H1 (cell line): ENCODE measurements at regions of chr2 and their contacts with region 1.

Region 1: GRCh38 chr2:219079417-219079816 is 18.7 kb upstream of the IHH start:
- DNase-seq: no peak
- H3K4me3 ChIP-seq: no peak overlapping the region
- H3K27ac ChIP-seq: no peak overlapping the region
- H3K4me1 ChIP-seq: no peaks in the 10 kb centered on the region
- H3K27me3 ChIP-seq: no peaks in the 10 kb centered on the region
- CTCF ChIP-seq: no peak
- EP300 ChIP-seq: no peak
- POLR2A ChIP-seq: no peak
- RAD21 ChIP-seq: no peak

Region 2: GRCh38 chr2:219065484-219065883 is 13.9 kb before region 1 on chr2:
- CTCF ChIA-PET with region 1: interaction called, 1,006 read pairs
- POLR2A ChIA-PET with region 1: interaction called, 3 read pairs
- DNase-seq: no peak
- H3K4me3 ChIP-seq: no peak overlapping the region
- H3K27ac ChIP-seq: no peak overlapping the region
- H3K4me1 ChIP-seq: peaks cover 0 to 2% (median 0%) of the 10 kb centered on the region in 4 experiments; a peak in 5 of 7 replicates
- H3K27me3 ChIP-seq: peaks cover 24 to 37% (median 31%) of the 10 kb centered on the region in 4 experiments
- CTCF ChIP-seq: no peak
- EP300 ChIP-seq: no peak
- POLR2A ChIP-seq: no peak
- RAD21 ChIP-seq: no peak